Activated CD4-positive, alpha-beta memory T cell treated with anti-CD3 and anti-CD28 coated beads for 36 hours (primary cell): ENCODE measurements at regions of chr11 and their contacts with region 1.

Region 1: GRCh38 chr11:798093-798713 is at the start of gene SLC25A22:
- DNase-seq: peak; percentile 88
- H3K4me3 Mint-ChIP-seq: peak within 1 kb of the TSS; percentile 81
- H3K27ac Mint-ChIP-seq: peak within 1 kb of the TSS; percentile 76
- H3K4me1 Mint-ChIP-seq: peaks cover 19% of the 10 kb centered on the region
- H3K27me3 Mint-ChIP-seq: no peaks in the 10 kb centered on the region
- total RNA-seq, gene SLC25A22: 28.4 to 32.2 TPM

Region 2: DNA sequence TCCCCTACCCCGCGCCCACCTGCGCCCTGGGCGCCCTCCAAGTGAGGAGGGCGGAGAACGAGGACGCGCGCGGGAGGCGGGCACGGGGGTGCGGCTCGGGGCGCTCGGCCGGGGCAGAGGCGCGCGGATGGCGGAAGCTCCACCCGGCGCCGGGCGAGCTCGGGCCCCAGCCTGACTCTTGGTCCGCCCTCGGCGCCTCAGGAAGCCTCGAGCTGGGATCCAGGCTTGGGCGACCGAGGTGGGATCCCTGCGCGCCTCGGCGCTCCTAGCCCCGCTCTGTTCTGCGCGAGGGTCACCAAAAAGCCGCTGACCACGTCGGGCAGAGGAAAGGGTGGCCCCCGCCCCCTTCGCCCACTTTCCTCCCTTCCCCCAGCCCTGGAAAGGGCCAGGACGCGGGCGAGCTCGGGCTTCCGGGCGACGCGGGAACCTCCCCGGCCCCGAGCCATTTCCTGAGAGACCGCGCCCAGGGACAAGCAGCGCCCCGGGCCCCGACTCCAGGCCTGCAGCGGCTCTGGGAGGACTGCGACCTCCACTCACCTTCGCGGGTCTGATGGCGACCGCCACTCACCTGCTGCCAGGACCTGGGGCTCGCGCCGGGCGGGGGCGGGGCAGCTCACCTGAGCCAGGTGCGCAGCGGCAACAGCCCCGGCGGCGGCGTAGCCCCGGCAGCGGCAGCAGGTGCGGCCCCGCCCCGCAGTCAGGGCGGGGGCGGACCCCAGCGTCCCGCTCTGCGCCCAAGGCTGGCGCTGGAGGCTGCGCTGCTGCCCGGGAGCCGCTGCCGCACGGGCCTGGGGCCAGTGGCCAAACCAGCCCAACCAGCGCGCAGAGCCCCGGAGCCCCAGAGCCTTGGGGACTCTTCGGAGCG is 381.2 kb before region 1 on chr11:
- CTCF ChIA-PET with region 1: no interaction called
- POLR2A ChIA-PET with region 1: no interaction called
- intact Hi-C with region 1: loop called (anchors 10 kb)
- DNase-seq: peak; percentile 57
- H3K4me3 Mint-ChIP-seq: peak overlapping the region; percentile 83
- H3K27ac Mint-ChIP-seq: no peak overlapping the region
- H3K4me1 Mint-ChIP-seq: peaks cover 25% of the 10 kb centered on the region
- H3K27me3 Mint-ChIP-seq: no peaks in the 10 kb centered on the region

Region 3: GRCh38 chr11:615504-616319 is 182.5 kb before region 1 on chr11 and contains the start of gene IRF7:
- CTCF ChIA-PET with region 1: no interaction called
- POLR2A ChIA-PET with region 1: interaction called, 4 read pairs
- intact Hi-C with region 1: loop called (anchors 5 kb)
- DNase-seq: peak; percentile 94
- H3K4me3 Mint-ChIP-seq: peak within 1 kb of the TSS; percentile 92
- H3K27ac Mint-ChIP-seq: peak within 1 kb of the TSS; percentile 92
- H3K4me1 Mint-ChIP-seq: peaks cover 17% of the 10 kb centered on the region
- H3K27me3 Mint-ChIP-seq: no peaks in the 10 kb centered on the region
- total RNA-seq, gene IRF7: 79.9 to 80.7 TPM

Region 4: GRCh38 chr11:777288-778255 is 20.6 kb before region 1 on chr11 and contains the start of gene GATD1:
- CTCF ChIA-PET with region 1: interaction called, 5 read pairs
- POLR2A ChIA-PET with region 1: interaction called, 9 read pairs
- intact Hi-C with region 1: loop called (anchors 2 kb)
- DNase-seq: peak; percentile 95
- H3K4me3 Mint-ChIP-seq: peak within 1 kb of the TSS; percentile 85
- H3K27ac Mint-ChIP-seq: peak within 1 kb of the TSS; percentile 70
- H3K4me1 Mint-ChIP-seq: peaks cover 21% of the 10 kb centered on the region
- H3K27me3 Mint-ChIP-seq: no peaks in the 10 kb centered on the region
- total RNA-seq, gene GATD1: 36.6 to 39.1 TPM

Region 5: GRCh38 chr11:819129-819931 is 21.1 kb after region 1 on chr11:
- CTCF ChIA-PET with region 1: no interaction called
- POLR2A ChIA-PET with region 1: no interaction called
- intact Hi-C with region 1: loop called (anchors 1 kb)
- DNase-seq: peak; percentile 92
- H3K4me3 Mint-ChIP-seq: peak overlapping the region; percentile 79
- H3K27ac Mint-ChIP-seq: peak overlapping the region; percentile 58
- H3K4me1 Mint-ChIP-seq: peaks cover 14% of the 10 kb centered on the region
- H3K27me3 Mint-ChIP-seq: no peaks in the 10 kb centered on the region

Region 6: GRCh38 chr11:980438-981371 is 182.5 kb after region 1 on chr11:
- CTCF ChIA-PET with region 1: no interaction called
- POLR2A ChIA-PET with region 1: no interaction called
- intact Hi-C with region 1: no loop called
- DNase-seq: no peak
- H3K4me3 Mint-ChIP-seq: no peak overlapping the region
- H3K27ac Mint-ChIP-seq: no peak overlapping the region
- H3K4me1 Mint-ChIP-seq: peaks cover 3% of the 10 kb centered on the region
- H3K27me3 Mint-ChIP-seq: no peaks in the 10 kb centered on the region

Region 7: GRCh38 chr11:1181867-1182535 is 383.8 kb after region 1 on chr11:
- CTCF ChIA-PET with region 1: no interaction called
- POLR2A ChIA-PET with region 1: no interaction called
- intact Hi-C with region 1: no loop called
- DNase-seq: no peak
- H3K4me3 Mint-ChIP-seq: no peak overlapping the region
- H3K27ac Mint-ChIP-seq: no peak overlapping the region
- H3K4me1 Mint-ChIP-seq: no peaks in the 10 kb centered on the region
- H3K27me3 Mint-ChIP-seq: no peaks in the 10 kb centered on the region